ENCODE measurements at regions of chr12 and their contacts with region 1.

Region 1: DNA sequence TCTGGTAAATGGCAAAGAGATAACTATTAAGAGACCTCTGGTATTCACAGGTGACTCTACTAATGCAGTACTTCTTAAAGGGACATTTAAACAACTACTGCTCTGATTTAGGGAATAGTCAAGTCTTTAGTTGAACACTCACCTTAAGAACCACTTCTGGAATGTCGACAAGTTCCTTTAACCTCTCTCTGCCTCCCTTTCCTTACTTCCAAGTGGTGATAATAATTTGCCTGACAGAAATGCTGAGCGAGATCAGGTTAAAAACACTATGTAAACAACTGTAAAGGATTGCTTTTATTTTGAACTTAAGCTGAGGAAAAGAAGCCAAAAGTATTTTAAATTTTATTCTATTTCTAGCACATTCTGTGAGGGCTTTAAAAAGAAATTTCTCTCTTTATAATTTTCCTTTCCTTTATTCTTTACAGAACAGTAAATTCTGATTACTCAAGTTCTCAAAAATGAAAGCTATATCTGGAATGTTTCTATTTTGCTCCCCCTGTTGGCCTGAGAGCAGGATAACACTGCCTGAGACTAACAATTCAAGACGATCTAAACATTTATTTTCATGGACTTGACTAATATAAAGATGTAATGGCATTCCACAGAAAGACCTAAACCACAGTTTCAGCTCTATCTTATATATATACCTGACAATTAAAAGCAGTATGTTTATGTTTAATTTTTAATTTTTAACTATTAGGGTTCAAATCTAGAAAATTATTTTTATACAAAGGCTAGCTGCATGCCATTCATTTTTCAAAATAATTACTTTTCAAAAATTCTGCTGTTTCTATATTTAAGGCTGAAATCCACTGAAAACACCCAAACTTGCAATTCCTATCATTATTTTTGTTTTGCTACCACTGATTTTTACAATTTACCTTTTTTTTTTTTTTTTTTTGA is 29.2 kb downstream of the ZCCHC8 start:
- DNase-seq: no peak
- H3K4me3 ChIP-seq: no peak overlapping the region
- H3K27ac ChIP-seq: peak overlapping the region; percentile 16
- H3K4me1 ChIP-seq: peaks cover 17% of the 10 kb centered on the region
- H3K27me3 ChIP-seq: no peaks in the 10 kb centered on the region
- CTCF ChIP-seq: peak; percentile 86

Region 2: DNA sequence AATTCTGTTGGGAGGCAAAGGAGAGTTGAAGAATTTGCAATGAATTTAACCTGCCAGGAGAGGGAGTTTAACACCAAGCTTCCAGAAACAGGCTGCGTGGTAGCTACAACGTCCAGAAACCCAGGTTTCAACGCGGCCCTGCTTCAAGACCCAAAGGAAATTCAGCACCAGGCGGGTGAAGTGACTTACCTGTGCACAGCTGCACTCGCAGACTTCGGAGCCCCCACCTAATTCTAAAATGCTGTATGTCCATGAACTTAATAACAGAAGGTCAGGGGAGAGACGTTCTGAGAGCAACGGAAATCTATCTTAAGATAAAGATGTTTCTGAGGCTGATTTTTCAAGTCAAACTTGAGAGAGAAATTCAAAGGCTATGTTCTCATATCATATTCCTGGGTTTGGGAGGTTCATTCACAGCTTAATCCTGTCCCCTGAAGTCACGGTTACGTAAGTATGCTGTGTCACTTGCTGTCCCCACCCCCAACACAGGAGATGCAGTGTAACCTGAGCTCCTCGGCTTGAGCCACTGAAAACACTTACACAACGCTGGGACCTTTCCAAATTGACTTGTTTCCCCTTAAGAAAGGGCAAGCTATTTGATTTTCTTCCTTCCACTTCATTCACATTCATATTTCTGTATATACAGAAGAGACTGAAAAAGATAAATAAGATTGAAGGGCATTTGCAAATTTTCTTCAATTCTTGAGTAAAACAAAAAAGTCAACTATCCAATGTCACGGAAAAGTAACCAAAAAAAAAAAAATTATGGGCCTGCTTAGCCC is 71.8 kb before region 1 on chr12:
- intact Hi-C with region 1: loop called (anchors 5 kb)
- DNase-seq: peak; percentile 53
- H3K4me3 ChIP-seq: peak overlapping the region; percentile 41
- H3K27ac ChIP-seq: peak overlapping the region; percentile 86
- H3K4me1 ChIP-seq: peaks cover 43% of the 10 kb centered on the region
- H3K27me3 ChIP-seq: no peaks in the 10 kb centered on the region
- CTCF ChIP-seq: peak; percentile 77

Measured in left ventricle myocardium inferior (tissue), 1 donor.